ENCODE measurements at regions of chr7 and their contacts with region 1.

Region 1: GRCh38 chr7:155610633-155611193 is 33.7 kb upstream of the RBM33 start:
- DNase-seq: no peak
- H3K4me3 ChIP-seq: no peak overlapping the region
- H3K27ac ChIP-seq: no peak overlapping the region
- H3K27me3 ChIP-seq: no peaks in the 10 kb centered on the region
- CTCF ChIP-seq: no peak

Region 2: GRCh38 chr7:155356323-155357105 is 254.2 kb before region 1 on chr7:
- CTCF ChIA-PET with region 1: no interaction called
- POLR2A ChIA-PET with region 1: no interaction called
- DNase-seq: no peak
- H3K4me3 ChIP-seq: no peak overlapping the region
- H3K27ac ChIP-seq: no peak overlapping the region
- H3K27me3 ChIP-seq: peaks cover 21% of the 10 kb centered on the region
- CTCF ChIP-seq: peak; percentile 35

Region 3: GRCh38 chr7:155644178-155644970 is 33.7 kb after region 1 on chr7 and contains the start of gene RBM33:
- CTCF ChIA-PET with region 1: no interaction called
- POLR2A ChIA-PET with region 1: interaction called, 12 read pairs
- DNase-seq: peak; percentile 49
- H3K4me3 ChIP-seq: peak within 1 kb of the TSS; percentile 95
- H3K27ac ChIP-seq: peak within 1 kb of the TSS; percentile 88
- H3K27me3 ChIP-seq: no peaks in the 10 kb centered on the region
- CTCF ChIP-seq: 0 out of 2 replicates have a peak, but pooled peaks have one; percentile 2
- polyA plus RNA-seq, gene RBM33: 8.3 and 9.5 TPM in 2 replicates

Measured in AG04450 (cell line).